A673 (cell line): ENCODE measurements at regions of chr3 and their contacts with region 1.

Region 1: GRCh38 chr3:157081681-157082210 is 78.2 kb downstream of the CCNL1 start:
- DNase-seq: peak; percentile 97
- H3K4me3 ChIP-seq: no peak overlapping the region
- H3K27ac ChIP-seq: peak overlapping the region; percentile 62
- H3K4me1 ChIP-seq: peaks cover 45% of the 10 kb centered on the region
- H3K27me3 ChIP-seq: no peaks in the 10 kb centered on the region
- CTCF ChIP-seq: peak; percentile 97

Region 2: DNA sequence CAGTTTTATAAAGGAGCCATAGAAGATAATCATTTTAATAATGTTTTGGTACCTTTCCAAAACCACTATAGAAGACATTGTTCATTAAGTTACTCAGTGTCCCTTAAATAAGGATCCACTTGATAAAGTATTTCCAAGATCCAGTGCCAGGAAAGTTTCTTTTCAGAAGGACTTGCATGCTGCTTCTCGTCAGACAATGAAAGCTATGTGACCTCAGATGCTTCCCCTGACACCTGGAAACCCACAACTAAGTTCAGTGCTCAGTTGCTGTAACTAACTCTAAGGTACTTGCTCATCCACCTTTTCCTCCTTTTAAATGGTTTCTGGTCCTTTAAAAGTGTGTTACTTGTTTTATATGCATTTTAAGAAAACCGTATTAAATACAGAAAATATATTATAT is 534.1 kb before region 1 on chr3:
- CTCF ChIA-PET with region 1: no interaction called
- POLR2A ChIA-PET with region 1: no interaction called
- intact Hi-C with region 1: loop called (anchors 2 kb)
- DNase-seq: no peak
- H3K4me3 ChIP-seq: no peak overlapping the region
- H3K27ac ChIP-seq: peak overlapping the region; percentile 88
- H3K4me1 ChIP-seq: peaks cover 94% of the 10 kb centered on the region
- H3K27me3 ChIP-seq: no peaks in the 10 kb centered on the region
- CTCF ChIP-seq: no peak

Region 3: DNA sequence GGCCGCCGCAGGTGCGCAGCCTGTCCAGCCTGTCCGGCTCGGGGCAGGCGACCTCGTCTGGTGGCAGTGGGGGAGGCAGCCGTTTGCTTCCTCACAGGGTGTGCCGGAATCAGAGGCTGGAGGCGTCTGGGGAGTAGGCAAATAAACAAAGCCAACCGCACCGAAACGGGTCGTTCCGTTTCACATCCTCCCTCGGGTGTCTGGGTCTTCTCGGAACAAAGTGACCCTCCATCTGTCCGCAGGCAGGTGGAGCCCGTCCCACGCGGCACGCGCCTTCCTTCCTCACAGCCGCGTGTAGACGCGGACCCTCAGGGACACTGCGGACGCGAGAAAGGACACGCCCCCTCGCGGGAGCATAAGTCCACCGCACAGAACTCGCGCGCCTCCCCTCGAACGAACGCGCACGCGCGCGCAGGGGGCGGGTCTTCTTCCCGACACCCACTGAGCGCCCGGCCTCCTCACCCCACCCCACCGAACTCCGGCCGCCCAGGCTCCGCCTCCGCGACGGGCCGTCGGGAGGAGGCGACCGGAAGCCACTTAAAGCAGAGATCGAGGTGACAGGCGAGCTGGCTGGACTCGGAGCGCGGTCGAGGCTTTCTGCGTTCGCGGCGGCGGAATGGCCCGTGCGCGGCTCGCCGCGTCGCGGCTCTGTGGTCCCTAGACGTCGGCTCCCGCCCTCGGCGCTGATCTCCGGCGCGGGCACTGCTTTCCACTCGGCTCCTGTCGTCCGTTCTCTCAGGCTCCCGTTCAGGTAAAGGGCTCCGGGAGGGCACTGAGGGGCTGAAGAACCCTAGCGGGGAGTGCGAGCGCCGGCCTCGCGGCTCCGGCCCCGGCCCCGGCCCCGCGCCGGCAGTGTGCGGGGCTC is 407.5 kb before region 1 on chr3 and contains the start of gene TIPARP:
- CTCF ChIA-PET with region 1: no interaction called
- POLR2A ChIA-PET with region 1: no interaction called
- intact Hi-C with region 1: loop called (anchors 2 kb)
- DNase-seq: peak; percentile 99
- H3K4me3 ChIP-seq: peak within 1 kb of the TSS; percentile 89
- H3K27ac ChIP-seq: peak within 1 kb of the TSS; percentile 97
- H3K4me1 ChIP-seq: peaks cover 18% of the 10 kb centered on the region
- H3K27me3 ChIP-seq: no peaks in the 10 kb centered on the region
- CTCF ChIP-seq: peak; percentile 63
- total RNA-seq, gene TIPARP: 116 TPM in 2 replicates

Region 4: GRCh38 chr3:156691920-156692319 is 389.8 kb before region 1 on chr3:
- CTCF ChIA-PET with region 1: no interaction called
- POLR2A ChIA-PET with region 1: no interaction called
- intact Hi-C with region 1: loop called (anchors 5 kb)
- DNase-seq: peak; percentile 80
- H3K4me3 ChIP-seq: peak overlapping the region; percentile 27
- H3K27ac ChIP-seq: peak overlapping the region; percentile 70
- H3K4me1 ChIP-seq: peaks cover 90% of the 10 kb centered on the region
- H3K27me3 ChIP-seq: no peaks in the 10 kb centered on the region
- CTCF ChIP-seq: no peak

Region 5: GRCh38 chr3:156816800-156817645 is 264.7 kb before region 1 on chr3:
- CTCF ChIA-PET with region 1: no interaction called
- POLR2A ChIA-PET with region 1: no interaction called
- intact Hi-C with region 1: loop called (anchors 5 kb)
- DNase-seq: peak; percentile 89
- H3K4me3 ChIP-seq: peak overlapping the region; percentile 49
- H3K27ac ChIP-seq: peak overlapping the region; percentile 63
- H3K4me1 ChIP-seq: peaks cover 54% of the 10 kb centered on the region
- H3K27me3 ChIP-seq: no peaks in the 10 kb centered on the region
- CTCF ChIP-seq: no peak; the same call in 1 of the 2 replicates